BJ (cell line): ENCODE measurements at regions of chr11 and their contacts with region 1.

Region 1: GRCh38 chr11:72144807-72145560 is 9.5 kb downstream of the FOLR3 start:
- DNase-seq: peak; percentile 88
- H3K4me3 ChIP-seq: no peak overlapping the region
- H3K27me3 ChIP-seq: no peaks in the 10 kb centered on the region
- CTCF ChIP-seq: no peak

Region 2: GRCh38 chr11:72091005-72091691 is 53.8 kb before region 1 on chr11:
- CTCF ChIA-PET with region 1: interaction called, 27 read pairs
- POLR2A ChIA-PET with region 1: no interaction called
- DNase-seq: no peak
- H3K4me3 ChIP-seq: no peak overlapping the region
- H3K27me3 ChIP-seq: no peaks in the 10 kb centered on the region
- CTCF ChIP-seq: peak; percentile 90

Region 3: GRCh38 chr11:72123117-72123653 is 21.8 kb before region 1 on chr11:
- CTCF ChIA-PET with region 1: interaction called, 11 read pairs
- POLR2A ChIA-PET with region 1: no interaction called
- DNase-seq: no peak
- H3K4me3 ChIP-seq: no peak overlapping the region
- H3K27me3 ChIP-seq: no peaks in the 10 kb centered on the region
- CTCF ChIP-seq: no peak

Region 4: DNA sequence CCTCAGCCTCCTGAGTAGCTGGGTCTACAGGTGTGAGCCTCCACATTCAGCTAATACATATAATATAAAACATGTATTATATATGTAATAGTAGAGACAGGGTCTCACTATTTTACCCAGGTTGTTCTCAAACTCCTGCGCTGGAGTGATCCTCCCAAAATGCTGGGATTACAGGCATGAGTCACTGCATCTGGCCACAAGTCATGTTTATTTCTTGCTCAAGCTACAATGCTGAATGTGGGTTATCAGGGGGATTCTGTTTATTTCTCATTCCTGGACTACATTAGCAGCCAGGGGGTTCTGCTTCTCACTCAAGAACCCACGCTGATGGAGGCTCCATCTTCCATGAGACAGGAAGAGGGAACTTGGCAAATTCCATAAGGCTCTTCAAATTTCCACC is 15.3 kb after region 1 on chr11:
- CTCF ChIA-PET with region 1: interaction called, 34 read pairs
- POLR2A ChIA-PET with region 1: no interaction called
- DNase-seq: no peak
- H3K4me3 ChIP-seq: no peak overlapping the region
- H3K27me3 ChIP-seq: no peaks in the 10 kb centered on the region; the same call in 1 of the 2 replicates
- CTCF ChIP-seq: no peak